ENCODE measurements at regions of chr11 and their contacts with region 1.

Region 1: DNA sequence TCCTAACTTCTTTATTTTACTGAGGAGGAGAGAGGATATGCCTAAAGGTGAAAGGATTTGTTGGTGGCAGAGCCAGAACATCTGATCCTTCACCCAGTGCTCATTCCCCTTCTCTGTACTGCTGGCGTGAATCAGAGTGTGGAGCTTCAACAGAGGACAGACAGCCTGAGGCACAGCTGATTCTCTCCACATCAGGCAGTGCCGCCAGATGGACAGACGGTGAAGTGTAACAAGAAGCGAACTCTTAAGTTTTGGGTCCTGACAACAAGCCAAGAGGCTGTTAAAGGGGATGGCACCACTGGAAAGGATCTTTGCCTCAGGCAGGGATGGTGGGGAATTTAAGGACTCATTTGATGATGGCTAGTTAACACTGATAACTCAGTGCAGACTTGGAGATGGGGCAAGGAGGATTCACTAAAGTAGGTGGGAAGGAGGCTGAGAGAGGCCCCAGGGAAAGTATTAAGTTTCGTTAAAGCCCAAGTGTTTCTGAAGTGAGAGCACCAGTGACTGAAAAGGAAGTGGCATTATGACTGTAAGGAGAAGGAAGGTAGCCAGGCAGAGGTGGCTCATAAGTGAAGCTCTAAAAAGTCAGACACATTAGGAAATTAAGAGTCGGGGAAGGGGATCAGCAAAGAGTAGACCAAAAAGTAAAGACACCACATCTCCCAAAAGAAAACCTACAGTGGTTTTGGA is 81.3 kb downstream of the CLPB start:
- DNase-seq: peak; percentile 85
- ATAC-seq: peak; percentile 96
- H3K4me3 ChIP-seq: no peak overlapping the region
- H3K27ac ChIP-seq: no peak overlapping the region
- H3K4me1 ChIP-seq: peaks cover 12% of the 10 kb centered on the region
- H3K27me3 ChIP-seq: no peaks in the 10 kb centered on the region
- CTCF ChIP-seq: peak; percentile 69
- POLR2A ChIP-seq: no peak
- RAD21 ChIP-seq: peak; percentile 85

Region 2: GRCh38 chr11:72278911-72279310 is 74.1 kb before region 1 on chr11:
- CTCF ChIA-PET with region 1: no interaction called
- POLR2A ChIA-PET with region 1: no interaction called
- dilution Hi-C with region 1: no loop called
- in situ Hi-C with region 1: no loop called
- intact Hi-C with region 1: loop called (anchors 5 kb)
- DNase-seq: peak; percentile 73
- ATAC-seq: peak; percentile 72
- H3K4me3 ChIP-seq: no peak overlapping the region
- H3K27ac ChIP-seq: no peak overlapping the region
- H3K4me1 ChIP-seq: no peaks in the 10 kb centered on the region
- H3K27me3 ChIP-seq: peaks cover 3% of the 10 kb centered on the region; the same call in 1 of the 2 replicates
- CTCF ChIP-seq: no peak
- POLR2A ChIP-seq: no peak
- RAD21 ChIP-seq: no peak